Right lobe of liver (tissue), 6 donors: ENCODE measurements at regions of chrX and their contacts with region 1.

Region 1: GRCh38 chrX:136953867-136954787 is 73.6 kb upstream of the RBMX start:
- DNase-seq: peak; percentile 69 to 71 (median 70)
- ATAC-seq: peak; percentile 89 to 98 (median 94)
- H3K4me3 ChIP-seq: no peak overlapping the region
- H3K27ac ChIP-seq: no peak overlapping the region
- H3K4me1 ChIP-seq: peaks cover 0 to 3% (median 0%) of the 10 kb centered on the region in 4 donors
- H3K27me3 ChIP-seq: no peaks in the 10 kb centered on the region
- CTCF ChIP-seq: peak; percentile 50 to 73 (median 70)
- POLR2A ChIP-seq: no peak

Region 2: GRCh38 chrX:137051978-137052642 is 98.0 kb after region 1 on chrX:
- intact Hi-C with region 1: loop called (anchors 10 kb)
- DNase-seq: peak; percentile 59 to 72 (median 66)
- ATAC-seq: peak; percentile 97 to 100 (median 99)
- H3K4me3 ChIP-seq: peak overlapping the region; percentile 25 to 44 (median 40)
- H3K27ac ChIP-seq: no peak overlapping the region
- H3K4me1 ChIP-seq: no peaks in the 10 kb centered on the region
- H3K27me3 ChIP-seq: no peaks in the 10 kb centered on the region
- CTCF ChIP-seq: peak; percentile 63 to 84 (median 79)
- POLR2A ChIP-seq: no peak

Region 3: GRCh38 chrX:137278825-137279224 is 324.7 kb after region 1 on chrX:
- intact Hi-C with region 1: no loop called
- DNase-seq: no peak
- ATAC-seq: no peak
- H3K4me3 ChIP-seq: no peak overlapping the region
- H3K27ac ChIP-seq: no peak overlapping the region
- H3K4me1 ChIP-seq: no peaks in the 10 kb centered on the region
- H3K27me3 ChIP-seq: peaks cover 0 to 9% of the 10 kb centered on the region in 2 donors
- CTCF ChIP-seq: no peak
- POLR2A ChIP-seq: no peak